ENCODE measurements at regions of chr17 and their contacts with region 1.

Region 1: DNA sequence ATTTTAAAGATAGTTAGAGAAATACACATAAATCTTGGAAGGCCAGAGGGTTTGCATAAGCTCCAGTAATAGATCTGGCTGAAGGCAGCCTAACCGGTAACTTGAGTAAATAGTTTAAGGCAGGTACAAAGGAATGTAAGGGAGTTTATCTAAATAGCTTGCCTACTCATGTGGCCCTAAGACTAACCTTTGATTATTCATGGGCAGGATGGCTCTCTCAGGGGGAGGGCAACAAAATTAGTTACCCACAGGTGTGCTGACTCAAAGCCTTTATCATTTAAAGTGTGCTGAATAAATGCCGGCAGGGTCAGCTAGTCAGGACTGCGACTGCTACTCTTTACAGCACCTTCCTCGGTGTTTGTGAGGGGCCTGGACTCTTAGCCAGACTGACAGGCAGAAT is 761.3 kb upstream of the KIF2B start:
- DNase-seq: no peak
- H3K4me3 ChIP-seq: no peak overlapping the region
- H3K27ac ChIP-seq: no peak overlapping the region
- H3K4me1 ChIP-seq: no peaks in the 10 kb centered on the region
- H3K27me3 ChIP-seq: no peaks in the 10 kb centered on the region
- CTCF ChIP-seq: no peak

Region 2: DNA sequence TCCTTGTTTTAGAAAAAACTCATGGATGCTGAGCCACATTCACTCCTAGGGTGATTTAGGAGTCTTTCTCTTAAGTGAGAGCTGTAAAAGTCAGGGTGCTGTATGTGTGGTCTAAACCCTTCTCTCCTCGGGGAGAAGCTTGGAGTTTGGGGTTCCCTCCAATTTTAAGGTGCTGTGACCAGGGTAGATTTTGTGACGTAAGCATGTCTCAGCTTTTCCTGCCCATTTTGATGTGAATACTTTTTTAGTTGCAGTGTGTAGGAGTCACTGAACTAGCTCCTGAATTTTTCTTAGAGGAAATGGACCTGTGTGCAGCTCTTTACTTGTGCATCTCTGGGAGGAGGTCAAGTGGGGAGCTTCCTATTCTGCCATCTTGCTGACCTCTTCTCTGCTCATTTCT is 86.1 kb before region 1 on chr17:
- intact Hi-C with region 1: no loop called
- DNase-seq: no peak
- H3K4me3 ChIP-seq: no peak overlapping the region
- H3K27ac ChIP-seq: no peak overlapping the region
- H3K4me1 ChIP-seq: no peaks in the 10 kb centered on the region
- H3K27me3 ChIP-seq: no peaks in the 10 kb centered on the region
- CTCF ChIP-seq: no peak

Region 3: DNA sequence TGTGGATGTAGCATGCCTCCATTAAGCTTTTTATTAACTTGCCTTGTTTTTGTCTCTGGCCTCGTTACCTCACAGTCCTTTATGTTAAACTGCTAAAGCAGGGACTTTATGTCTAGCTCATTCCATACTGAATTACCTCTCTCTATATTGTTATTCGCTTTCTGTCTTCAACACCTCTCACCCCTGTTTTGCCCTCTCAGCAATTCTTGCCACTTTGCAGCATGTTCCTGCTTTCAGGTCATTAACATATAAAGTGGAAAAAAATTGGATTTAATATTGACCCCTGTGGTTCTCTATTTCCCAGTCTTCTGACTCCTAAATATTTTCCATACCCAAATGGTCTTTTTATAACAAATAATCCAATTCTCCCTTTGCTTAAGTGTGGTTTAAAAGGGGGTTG is 49.1 kb before region 1 on chr17:
- intact Hi-C with region 1: loop called (anchors 10 kb)
- DNase-seq: no peak
- H3K4me3 ChIP-seq: no peak overlapping the region
- H3K27ac ChIP-seq: no peak overlapping the region
- H3K4me1 ChIP-seq: no peaks in the 10 kb centered on the region
- H3K27me3 ChIP-seq: no peaks in the 10 kb centered on the region
- CTCF ChIP-seq: no peak

Region 4: GRCh38 chr17:53217311-53217710 is 155.9 kb after region 1 on chr17:
- intact Hi-C with region 1: no loop called
- DNase-seq: no peak
- H3K4me3 ChIP-seq: no peak overlapping the region
- H3K27ac ChIP-seq: no peak overlapping the region
- H3K4me1 ChIP-seq: no peaks in the 10 kb centered on the region
- H3K27me3 ChIP-seq: no peaks in the 10 kb centered on the region
- CTCF ChIP-seq: no peak